ENCODE measurements at regions of chr3 and their contacts with region 1.

Region 1: DNA sequence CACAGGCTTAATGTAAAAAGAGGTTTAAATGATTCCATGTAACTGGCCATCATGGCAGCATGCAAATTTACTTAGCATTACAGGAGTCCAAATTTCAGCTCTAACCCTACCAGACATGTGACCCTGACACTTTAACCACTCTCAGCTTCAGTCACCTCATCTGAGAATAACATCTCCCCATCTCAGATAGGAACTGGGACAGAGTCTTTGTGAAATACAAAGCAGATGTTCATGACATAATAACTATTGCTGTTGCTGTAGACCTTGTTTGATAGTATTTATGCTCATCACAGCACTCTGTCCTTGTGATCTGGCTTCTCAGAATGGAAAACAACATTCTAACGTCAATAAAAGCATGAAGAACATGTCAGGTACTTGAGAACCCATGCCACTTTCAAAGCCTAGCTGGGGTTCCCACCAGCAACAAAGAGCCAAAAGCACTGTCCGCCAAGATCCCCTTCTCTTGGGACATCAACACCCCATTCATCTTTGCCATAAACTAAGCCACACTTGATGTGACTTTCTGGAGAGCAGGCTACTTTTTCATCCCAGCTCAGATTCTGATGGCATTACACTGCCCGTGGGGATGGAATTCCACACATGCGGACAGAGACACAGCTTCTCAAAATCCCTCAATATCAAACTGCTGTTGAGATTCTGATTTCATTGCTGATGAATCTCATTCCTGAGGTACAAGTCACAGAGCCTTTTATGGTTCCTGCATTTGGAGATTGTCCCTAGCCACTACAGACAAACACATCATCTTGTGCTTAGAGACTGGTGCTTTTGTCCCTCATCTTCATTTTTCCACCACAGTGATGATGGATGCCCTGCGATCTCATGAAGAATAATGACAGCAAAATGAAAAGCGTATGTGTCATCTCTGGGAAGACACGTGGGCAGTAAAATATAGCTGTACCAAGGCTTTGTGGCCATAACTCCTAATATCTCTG is 202.7 kb downstream of the TNIK start:
- DNase-seq: no peak
- H3K4me3 Mint-ChIP-seq: peak overlapping the region; percentile 29
- H3K27ac Mint-ChIP-seq: peak overlapping the region; percentile 94
- H3K4me1 Mint-ChIP-seq: peaks cover 92% of the 10 kb centered on the region
- H3K27me3 Mint-ChIP-seq: no peaks in the 10 kb centered on the region

Region 2: GRCh38 chr3:170553788-170554757 is 703.5 kb before region 1 on chr3:
- intact Hi-C with region 1: no loop called
- DNase-seq: no peak
- H3K4me3 Mint-ChIP-seq: no peak overlapping the region
- H3K27ac Mint-ChIP-seq: no peak overlapping the region
- H3K4me1 Mint-ChIP-seq: no peaks in the 10 kb centered on the region
- H3K27me3 Mint-ChIP-seq: peaks cover 17% of the 10 kb centered on the region

Region 3: DNA sequence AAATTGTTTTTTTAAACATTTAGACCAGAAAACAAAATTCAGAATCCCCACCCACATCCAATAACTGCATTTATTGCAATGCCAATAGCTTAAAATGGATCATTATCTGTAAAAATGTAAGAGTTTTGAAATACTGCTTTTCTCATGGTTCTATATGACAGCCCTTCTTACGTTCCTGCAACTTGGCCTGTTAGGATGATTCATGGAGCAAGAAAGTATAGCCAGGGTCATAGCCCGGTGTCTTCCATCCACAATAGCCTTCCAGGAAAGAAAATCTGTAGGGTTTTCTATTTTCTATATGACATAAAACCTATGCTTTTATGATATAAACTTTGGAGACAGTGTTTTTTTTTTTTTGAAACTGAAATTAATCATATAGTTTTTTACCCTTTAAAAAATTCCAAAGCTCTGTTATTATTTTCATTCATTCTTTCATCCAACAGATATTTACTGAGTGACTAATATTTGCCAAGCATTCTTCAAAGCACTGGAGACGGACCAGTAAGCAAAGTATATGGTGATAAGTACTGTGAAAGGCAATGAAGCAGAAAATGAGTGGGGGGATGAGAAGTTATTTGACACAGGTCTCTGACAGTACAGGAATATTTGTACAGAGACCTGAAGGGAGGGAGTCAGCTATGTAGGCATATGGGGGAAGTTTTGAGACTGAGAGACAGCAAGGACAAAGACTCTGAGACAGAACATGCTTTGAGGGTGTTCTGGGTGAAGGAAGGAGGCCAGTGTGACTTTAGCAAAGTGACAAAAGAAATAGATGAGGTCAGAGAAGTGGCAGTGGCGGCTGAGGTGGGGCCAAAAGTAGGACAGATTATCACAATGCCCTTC is 202.0 kb before region 1 on chr3:
- intact Hi-C with region 1: no loop called
- DNase-seq: no peak
- H3K4me3 Mint-ChIP-seq: no peak overlapping the region
- H3K27ac Mint-ChIP-seq: no peak overlapping the region
- H3K4me1 Mint-ChIP-seq: no peaks in the 10 kb centered on the region
- H3K27me3 Mint-ChIP-seq: peaks cover 10% of the 10 kb centered on the region

Region 4: DNA sequence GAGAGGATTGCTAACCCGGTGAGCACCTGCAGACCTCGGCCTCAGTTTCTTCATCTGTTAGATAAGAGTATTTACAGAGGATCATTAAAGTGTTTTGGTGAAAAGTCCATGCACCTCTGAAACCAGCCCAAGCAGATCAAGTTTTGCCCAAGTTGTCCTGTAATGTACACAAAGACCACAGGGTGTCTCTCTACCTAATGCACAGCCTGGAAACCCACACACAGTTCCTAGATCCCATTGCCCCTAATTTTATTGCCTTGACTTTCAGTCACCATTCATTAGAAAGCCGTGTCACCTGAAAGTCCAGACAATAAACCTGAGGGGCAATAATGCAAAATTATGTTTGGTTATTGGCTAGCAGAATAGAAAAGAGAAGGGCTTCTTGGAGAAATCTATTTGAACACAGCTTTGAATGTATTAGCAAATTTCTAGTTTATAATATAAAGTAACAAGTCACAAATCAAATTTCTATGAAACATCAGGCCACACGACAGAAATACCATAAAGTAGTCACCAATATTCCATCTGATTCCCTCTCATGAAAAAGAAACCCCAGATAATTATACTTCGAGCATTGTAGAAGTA is 69.7 kb before region 1 on chr3:
- intact Hi-C with region 1: loop called (anchors 2 kb)
- DNase-seq: no peak
- H3K4me3 Mint-ChIP-seq: no peak overlapping the region
- H3K27ac Mint-ChIP-seq: no peak overlapping the region
- H3K4me1 Mint-ChIP-seq: peaks cover 56% of the 10 kb centered on the region
- H3K27me3 Mint-ChIP-seq: no peaks in the 10 kb centered on the region

Region 5: DNA sequence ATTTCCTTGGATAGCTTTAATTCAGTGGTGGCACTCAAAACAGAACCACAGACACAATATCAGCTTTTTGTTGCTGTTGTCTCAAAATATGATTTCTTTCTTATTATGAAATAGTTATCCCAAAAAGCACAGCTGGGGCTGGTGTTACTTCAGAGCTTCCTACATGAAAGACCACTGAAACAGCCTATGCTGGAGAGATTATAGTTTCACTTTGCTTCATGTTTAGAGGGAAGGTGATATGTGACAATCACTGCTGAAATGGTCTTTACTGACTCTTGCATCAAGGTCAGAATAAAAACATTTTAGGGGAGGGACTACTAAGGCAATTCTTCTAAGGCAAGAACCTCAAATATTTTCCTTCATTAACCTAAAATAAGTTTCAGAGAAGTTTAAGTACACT is 12.0 kb after region 1 on chr3:
- intact Hi-C with region 1: loop called (anchors 1 kb)
- DNase-seq: no peak
- H3K4me3 Mint-ChIP-seq: no peak overlapping the region
- H3K27ac Mint-ChIP-seq: peak overlapping the region; percentile 31
- H3K4me1 Mint-ChIP-seq: peaks cover 76% of the 10 kb centered on the region
- H3K27me3 Mint-ChIP-seq: no peaks in the 10 kb centered on the region

Region 6: GRCh38 chr3:171846597-171846996 is 589.1 kb after region 1 on chr3:
- intact Hi-C with region 1: loop called (anchors 10 kb)
- DNase-seq: peak; percentile 7
- H3K4me3 Mint-ChIP-seq: no peak overlapping the region
- H3K27ac Mint-ChIP-seq: no peak overlapping the region
- H3K4me1 Mint-ChIP-seq: peaks cover 20% of the 10 kb centered on the region
- H3K27me3 Mint-ChIP-seq: peaks cover 11% of the 10 kb centered on the region

Measured in activated T-helper 1 cell treated with anti-CD3 and anti-CD28 coated beads, Interleukin-12 subunit alpha, Interleukin-12 subunit beta, Interleukin-2, Interleukin-4 antibody, amounts not matched to agents 30 ng/mL and 10 ng/mL and 1 ng/mL, durations not matched to agents 14 hours and 24 hours and 36 hours (primary cell).